ENCODE measurements at regions of chr15 and their contacts with region 1.

Region 1: GRCh38 chr15:64443747-64444621 is 16.4 kb upstream of the ZNF609 start:
- DNase-seq: peak; percentile 91
- H3K4me3 Mint-ChIP-seq: peak overlapping the region; percentile 67
- H3K27ac Mint-ChIP-seq: peak overlapping the region; percentile 80
- H3K4me1 Mint-ChIP-seq: peaks cover 26% of the 10 kb centered on the region
- H3K27me3 Mint-ChIP-seq: no peaks in the 10 kb centered on the region
- CTCF ChIP-seq: no peak

Region 2: GRCh38 chr15:64460206-64460734 is 16.3 kb after region 1 on chr15 and contains the start of gene ZNF609:
- CTCF ChIA-PET with region 1: interaction called, 3 read pairs
- POLR2A ChIA-PET with region 1: interaction called, 26 read pairs
- intact Hi-C with region 1: no loop called
- DNase-seq: peak; percentile 96
- H3K4me3 Mint-ChIP-seq: peak within 1 kb of the TSS; percentile 84
- H3K27ac Mint-ChIP-seq: peak within 1 kb of the TSS; percentile 78
- H3K4me1 Mint-ChIP-seq: peaks cover 32% of the 10 kb centered on the region
- H3K27me3 Mint-ChIP-seq: no peaks in the 10 kb centered on the region
- CTCF ChIP-seq: no peak
- total RNA-seq, gene ZNF609: 45.0 and 49.0 TPM in 2 replicates

Measured in MCF 10A (cell line).